WTC11 (cell line): ENCODE measurements at regions of chr7 and their contacts with region 1.

Region 1: DNA sequence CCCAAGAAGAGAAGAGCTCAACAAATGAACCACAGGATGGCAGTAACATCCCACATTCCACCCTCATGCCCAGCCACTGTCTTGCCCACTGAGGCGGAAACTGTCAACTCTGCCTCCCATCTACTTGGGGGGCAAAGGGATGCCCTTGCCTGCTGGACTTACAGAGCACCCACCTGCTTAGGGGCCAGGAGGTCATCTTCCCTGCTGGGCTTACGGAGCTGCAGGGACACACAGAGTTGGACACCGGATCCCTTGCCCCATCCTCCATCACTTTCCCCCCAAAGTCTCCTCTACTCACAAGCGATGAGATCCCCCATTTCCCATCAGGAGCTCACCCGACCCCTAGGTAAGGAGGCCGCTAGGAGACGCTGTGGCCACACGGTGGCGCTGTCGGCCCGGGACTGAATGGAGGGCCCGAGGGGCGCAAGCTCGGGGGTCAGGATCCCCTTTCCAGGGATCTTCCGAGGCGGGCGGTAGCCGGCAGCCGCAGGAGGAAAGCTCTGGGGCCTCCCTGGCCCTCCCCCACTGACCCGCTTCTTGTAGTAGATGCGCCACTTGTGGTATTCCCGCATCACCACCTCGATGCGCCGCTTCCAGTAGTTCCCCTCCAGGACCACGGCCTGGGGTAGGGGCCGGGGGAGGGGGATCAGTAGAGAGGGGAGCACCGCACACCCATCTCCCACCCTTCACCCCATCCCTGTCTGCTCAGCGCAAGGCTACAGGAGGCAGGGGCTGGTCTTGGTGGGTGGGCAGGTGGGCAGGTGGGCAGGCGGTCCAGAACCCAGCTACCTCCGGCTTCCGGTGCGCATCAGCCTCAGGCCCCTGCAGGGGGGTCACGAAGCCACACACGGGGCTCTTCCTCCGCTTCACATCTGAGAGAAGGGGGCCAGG is 17.3 kb downstream of the MLXIPL start:
- DNase-seq: peak; percentile 93
- ATAC-seq: peak; percentile 86
- H3K4me3 Mint-ChIP-seq: peak overlapping the region; percentile 71
- H3K27ac Mint-ChIP-seq: peak overlapping the region; percentile 57; the same call in 1 of the 2 replicates
- H3K4me1 Mint-ChIP-seq: peaks cover 3% of the 10 kb centered on the region
- H3K27me3 Mint-ChIP-seq: peaks cover 4% of the 10 kb centered on the region
- CTCF ChIP-seq: peak; percentile 97

Region 2: GRCh38 chr7:73522105-73522872 is 84.8 kb before region 1 on chr7 and contains the start of gene BAZ1B:
- CTCF ChIA-PET with region 1: interaction called, 13 read pairs
- POLR2A ChIA-PET with region 1: interaction called, 3 read pairs
- DNase-seq: peak; percentile 99
- ATAC-seq: peak; percentile 95
- H3K4me3 Mint-ChIP-seq: peak within 1 kb of the TSS; percentile 83
- H3K27ac Mint-ChIP-seq: peak within 1 kb of the TSS; percentile 98
- H3K4me1 Mint-ChIP-seq: peaks cover 36% of the 10 kb centered on the region
- H3K27me3 Mint-ChIP-seq: no peaks in the 10 kb centered on the region
- CTCF ChIP-seq: no peak
- total RNA-seq, gene BAZ1B: 64.9 to 66.5 TPM (median 66.3 TPM) in 3 replicates

Region 3: GRCh38 chr7:73623798-73624668 is 17.0 kb after region 1 on chr7 and contains the start of gene MLXIPL:
- CTCF ChIA-PET with region 1: interaction called, 53 read pairs
- POLR2A ChIA-PET with region 1: no interaction called
- DNase-seq: peak; percentile 96
- ATAC-seq: peak; percentile 89
- H3K4me3 Mint-ChIP-seq: peak within 1 kb of the TSS; percentile 83
- H3K27ac Mint-ChIP-seq: no peak within 1 kb of the TSS; the same call in 1 of the 2 replicates
- H3K4me1 Mint-ChIP-seq: peaks cover 7% of the 10 kb centered on the region
- H3K27me3 Mint-ChIP-seq: peaks cover 37% of the 10 kb centered on the region
- CTCF ChIP-seq: no peak
- total RNA-seq, gene MLXIPL: 20.4 to 26.6 TPM (median 23.8 TPM) in 3 replicates

Region 4: DNA sequence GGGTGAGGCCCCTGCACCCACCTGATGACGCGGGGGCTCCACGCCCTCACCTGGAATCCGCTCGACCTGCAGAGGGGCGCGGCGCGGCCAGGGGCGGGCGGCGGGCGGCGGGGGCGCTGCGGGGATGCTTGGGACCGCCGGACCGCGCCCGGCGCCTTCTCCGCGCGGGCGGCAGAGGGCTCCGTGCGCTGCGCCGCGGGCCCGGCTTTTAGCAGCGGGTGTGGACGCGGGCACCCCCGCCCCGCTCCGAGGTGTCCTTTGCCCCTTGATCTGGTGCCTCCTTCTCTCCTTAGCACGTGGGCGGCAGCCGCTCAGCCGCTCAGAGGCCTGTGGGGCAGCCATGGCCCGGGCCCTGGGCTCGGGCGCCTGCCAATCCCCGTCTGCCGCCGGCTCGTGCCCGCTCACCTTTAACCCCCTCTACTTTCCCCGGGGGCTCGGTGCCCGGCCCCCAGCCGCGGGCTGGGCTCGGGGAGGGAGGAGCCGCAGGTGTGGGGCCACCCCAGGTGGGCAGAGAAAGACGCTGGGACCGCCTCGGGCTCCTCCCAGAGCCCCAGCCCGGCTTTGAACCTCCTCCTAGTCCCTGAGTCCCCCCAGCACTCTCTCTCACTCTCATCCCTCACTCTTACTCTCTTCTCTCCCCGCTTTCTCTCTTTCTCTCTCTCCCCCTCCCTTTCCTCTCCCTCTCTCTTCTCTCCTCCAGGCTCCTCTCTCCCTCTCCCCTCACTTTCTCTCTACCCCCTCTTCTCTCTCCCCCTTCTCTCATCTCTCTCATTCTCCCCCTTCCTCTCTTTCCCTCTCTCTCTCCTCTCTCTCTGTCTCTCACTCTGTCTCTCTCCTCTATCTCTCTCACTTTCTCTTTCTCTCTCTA is 40.9 kb after region 1 on chr7:
- CTCF ChIA-PET with region 1: interaction called, 14 read pairs
- POLR2A ChIA-PET with region 1: no interaction called
- DNase-seq: peak; percentile 38
- ATAC-seq: peak; percentile 62
- H3K4me3 Mint-ChIP-seq: peak overlapping the region; percentile 70
- H3K27ac Mint-ChIP-seq: no peak overlapping the region
- H3K4me1 Mint-ChIP-seq: peaks cover 15% of the 10 kb centered on the region
- H3K27me3 Mint-ChIP-seq: peaks cover 74% of the 10 kb centered on the region
- CTCF ChIP-seq: no peak

Region 5: GRCh38 chr7:73701357-73701995 is 94.4 kb after region 1 on chr7:
- CTCF ChIA-PET with region 1: interaction called, 61 read pairs
- POLR2A ChIA-PET with region 1: interaction called, 3 read pairs
- DNase-seq: peak; percentile 87
- ATAC-seq: peak; percentile 75
- H3K4me3 Mint-ChIP-seq: peak overlapping the region; percentile 24; the same call in 1 of the 2 replicates
- H3K27ac Mint-ChIP-seq: peak overlapping the region; percentile 63; the same call in 1 of the 2 replicates
- H3K4me1 Mint-ChIP-seq: peaks cover 15% of the 10 kb centered on the region
- H3K27me3 Mint-ChIP-seq: no peaks in the 10 kb centered on the region
- CTCF ChIP-seq: peak; percentile 62

Region 6: DNA sequence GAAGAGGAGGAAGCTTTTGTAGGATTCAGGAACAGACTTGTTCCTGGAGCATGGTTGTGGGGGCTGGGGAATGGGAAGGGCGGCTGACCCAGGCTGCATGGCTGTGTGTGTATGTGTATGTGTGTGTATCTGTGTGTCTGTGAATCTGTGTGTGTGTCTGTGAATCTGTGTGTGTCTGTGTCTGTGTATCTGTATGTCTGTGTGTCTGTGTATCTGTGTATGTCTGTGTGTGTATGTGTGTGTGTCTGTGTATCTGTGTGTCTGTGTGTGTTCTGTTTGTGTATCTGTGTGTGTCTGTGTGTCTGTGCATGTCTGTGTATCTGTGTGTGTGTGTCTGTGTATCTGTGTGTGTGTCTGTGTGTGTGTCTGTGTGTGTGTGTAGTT is 119.0 kb after region 1 on chr7:
- CTCF ChIA-PET with region 1: interaction called, 113 read pairs
- POLR2A ChIA-PET with region 1: interaction called, 3 read pairs
- DNase-seq: no peak
- ATAC-seq: peak; percentile 8; the same call in 1 of the 2 replicates
- H3K4me3 Mint-ChIP-seq: no peak overlapping the region
- H3K27ac Mint-ChIP-seq: no peak overlapping the region
- H3K4me1 Mint-ChIP-seq: peaks cover 13% of the 10 kb centered on the region
- H3K27me3 Mint-ChIP-seq: peaks cover 15% of the 10 kb centered on the region
- CTCF ChIP-seq: no peak; the same call in 1 of the 2 replicates

Region 7: DNA sequence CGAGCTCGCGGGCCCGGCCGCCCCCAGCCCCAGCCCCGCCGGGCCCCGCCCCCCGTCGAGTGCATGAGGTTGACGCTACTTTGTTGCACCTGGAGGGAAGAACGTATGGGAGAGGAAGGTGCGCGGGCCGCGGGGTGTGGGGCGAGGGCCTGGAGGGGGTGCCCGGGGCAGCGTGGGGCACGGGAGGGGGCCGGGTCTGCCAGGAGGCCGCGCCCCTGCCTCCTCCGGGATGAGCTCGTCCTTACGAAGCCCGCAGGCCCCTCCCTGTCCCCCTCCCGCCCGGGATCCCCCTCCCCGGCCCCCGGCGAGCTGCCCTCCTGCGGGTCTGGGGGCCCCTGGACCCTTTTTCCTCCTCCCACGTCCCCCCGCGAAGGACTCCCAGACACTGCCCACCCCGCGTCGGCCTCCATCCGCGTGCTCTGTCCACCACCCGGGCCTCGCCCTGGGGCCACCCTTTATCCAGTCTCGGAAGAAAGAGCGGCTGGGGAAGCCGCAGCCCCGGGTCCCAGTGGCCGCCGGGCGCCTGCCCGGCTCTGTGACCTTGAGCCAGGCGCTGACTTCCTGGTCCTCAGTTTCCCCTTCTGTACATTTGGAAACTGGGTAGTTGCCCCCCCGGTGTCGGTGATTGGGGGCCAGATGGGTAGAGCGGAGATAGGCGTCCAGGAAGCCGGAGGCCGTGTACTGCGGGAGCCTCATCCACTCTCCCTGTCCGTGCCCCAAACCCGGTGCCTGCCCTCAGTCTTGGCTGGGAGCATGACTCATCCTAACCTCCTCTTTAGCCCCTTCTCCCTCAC is 477.1 kb after region 1 on chr7:
- CTCF ChIA-PET with region 1: no interaction called
- POLR2A ChIA-PET with region 1: no interaction called
- DNase-seq: no peak
- ATAC-seq: peak; percentile 38
- H3K4me3 Mint-ChIP-seq: peak overlapping the region; percentile 76
- H3K27ac Mint-ChIP-seq: no peak overlapping the region; the same call in 1 of the 2 replicates
- H3K4me1 Mint-ChIP-seq: peaks cover 19% of the 10 kb centered on the region
- H3K27me3 Mint-ChIP-seq: no peaks in the 10 kb centered on the region; the same call in 1 of the 2 replicates
- CTCF ChIP-seq: no peak